Tibial artery (tissue), 4 donors: ENCODE measurements at regions of chr1 and their contacts with region 1.

Region 1: DNA sequence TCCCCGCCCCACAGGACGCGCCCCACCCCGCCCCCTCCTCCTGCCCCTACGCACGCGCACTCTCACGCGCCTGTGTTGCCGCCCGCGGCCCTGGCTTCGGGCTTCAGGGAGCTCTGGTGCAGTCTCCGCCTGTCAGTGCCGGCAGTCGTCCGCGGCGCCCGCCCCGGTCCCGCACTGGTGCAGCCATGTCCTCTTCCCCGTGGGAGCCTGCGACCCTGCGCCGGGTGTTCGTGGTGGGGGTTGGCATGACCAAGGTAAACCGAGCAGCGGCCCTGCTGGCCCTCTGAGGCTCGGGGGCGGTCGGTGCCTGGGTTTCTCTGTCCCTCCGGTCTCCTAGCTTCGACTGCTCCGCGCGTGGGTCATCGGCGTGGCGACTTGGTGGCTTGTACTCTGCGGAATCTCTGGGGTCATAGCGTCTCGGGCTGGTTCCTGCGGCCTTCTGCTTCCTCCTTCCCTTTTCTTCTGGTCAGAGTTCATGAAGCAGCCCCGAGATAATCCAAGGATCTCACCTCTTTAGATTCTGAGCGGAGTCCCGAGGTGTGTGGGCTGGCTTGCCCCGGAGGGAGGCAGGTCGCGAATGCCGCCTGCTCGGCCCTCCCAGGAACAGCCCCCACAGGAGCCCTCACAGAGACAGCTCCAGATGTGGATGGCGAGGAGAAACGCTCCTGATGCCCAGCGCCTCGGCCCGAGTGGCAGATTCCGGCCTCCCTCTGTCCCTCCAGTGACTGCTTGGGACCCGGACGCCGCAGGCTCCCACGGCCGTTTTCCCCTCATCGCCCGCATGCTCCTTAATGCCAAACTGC is at the start of gene SCP2:
- DNase-seq: peak; percentile 83 to 91
- H3K4me3 ChIP-seq: peak within 1 kb of the TSS; percentile 73 to 75
- H3K27ac ChIP-seq: peak within 1 kb of the TSS; percentile 78 to 89
- H3K4me1 ChIP-seq: peaks cover 0 to 20% (median 7%) of the 10 kb centered on the region in 4 donors
- H3K27me3 ChIP-seq: no peaks in the 10 kb centered on the region
- CTCF ChIP-seq: no peak

Region 2: DNA sequence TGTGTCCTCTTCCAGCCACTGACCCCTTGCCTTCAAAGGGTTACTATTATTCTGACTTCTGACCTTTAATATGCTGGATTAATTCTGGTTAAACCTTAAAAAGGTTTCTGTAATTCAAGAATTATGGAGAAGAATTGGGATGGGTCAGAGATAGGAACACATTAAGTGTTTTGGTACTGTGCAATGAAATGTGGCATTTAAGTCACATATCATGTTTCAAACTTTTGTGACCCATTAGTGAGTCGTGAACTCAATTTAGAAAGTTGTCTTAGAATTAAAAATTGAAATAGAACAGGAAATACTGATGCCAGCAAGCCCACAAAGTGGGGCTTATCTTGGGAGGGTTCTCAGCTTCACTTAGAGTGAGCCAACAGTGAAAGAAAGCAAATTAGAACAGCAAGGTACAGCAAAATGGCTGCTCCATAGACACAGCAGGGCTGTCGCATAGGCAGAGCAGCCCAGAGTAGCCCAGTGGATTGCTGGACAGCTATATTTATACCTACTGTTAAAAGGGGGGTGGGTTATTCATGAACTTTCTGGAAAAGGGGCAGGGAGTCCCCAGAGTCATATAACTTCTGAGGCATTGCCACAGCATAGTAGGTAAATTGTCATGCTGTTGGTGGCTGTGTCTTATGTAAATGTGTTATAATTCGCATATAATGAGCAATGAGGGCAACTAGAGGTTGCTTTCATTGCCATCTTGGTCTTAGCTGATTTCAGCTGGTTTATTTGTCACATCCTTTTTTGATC is 10.2 kb after region 1 on chr1:
- intact Hi-C with region 1: no loop called
- DNase-seq: no peak
- H3K4me3 ChIP-seq: no peak overlapping the region
- H3K27ac ChIP-seq: no peak overlapping the region
- H3K4me1 ChIP-seq: no peaks in the 10 kb centered on the region
- H3K27me3 ChIP-seq: no peaks in the 10 kb centered on the region
- CTCF ChIP-seq: no peak

Region 3: GRCh38 chr1:53014791-53015507 is 87.5 kb after region 1 on chr1:
- intact Hi-C with region 1: no loop called
- DNase-seq: peak; percentile 77 to 81
- H3K4me3 ChIP-seq: peak overlapping the region; percentile 56 to 62
- H3K27ac ChIP-seq: peak overlapping the region; percentile 45 to 58
- H3K4me1 ChIP-seq: peaks cover 0 to 21% (median 7%) of the 10 kb centered on the region in 4 donors
- H3K27me3 ChIP-seq: no peaks in the 10 kb centered on the region
- CTCF ChIP-seq: no peak

Region 4: GRCh38 chr1:53196485-53197270 is 269.3 kb after region 1 on chr1 and contains the start of gene CPT2:
- intact Hi-C with region 1: loop called (anchors 10 kb)
- DNase-seq: peak; percentile 94 to 98
- H3K4me3 ChIP-seq: peak within 1 kb of the TSS; percentile 91 to 93
- H3K27ac ChIP-seq: peak within 1 kb of the TSS; percentile 97 to 99
- H3K4me1 ChIP-seq: peaks cover 0 to 39% (median 29%) of the 10 kb centered on the region in 4 donors
- H3K27me3 ChIP-seq: no peaks in the 10 kb centered on the region
- CTCF ChIP-seq: peak in 1 of 2 experiments; percentile 18